HCT116 (cell line): ENCODE measurements at regions of chr1 and their contacts with region 1.

Region 1: DNA sequence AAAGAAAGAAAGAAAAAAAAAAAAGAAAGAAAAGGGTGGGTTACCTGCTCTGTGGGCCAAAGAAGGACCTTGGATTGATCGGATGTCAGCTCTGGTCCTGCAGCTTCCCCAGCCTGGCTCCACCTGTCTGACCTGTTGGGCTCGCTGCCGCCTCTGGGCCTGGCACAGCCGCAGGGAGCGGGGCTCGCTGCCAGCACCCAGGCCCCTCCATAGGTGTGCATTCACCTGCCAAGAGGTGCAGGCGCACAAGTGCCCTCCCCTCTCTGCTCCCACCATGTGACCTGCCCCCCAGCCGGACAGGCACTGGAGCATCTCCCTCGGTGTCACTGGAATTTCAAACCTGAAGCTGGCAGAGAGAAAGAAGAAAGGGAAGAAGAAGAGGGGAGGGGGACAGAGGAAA is 33.1 kb upstream of the GPR157 start:
- DNase-seq: no peak
- ATAC-seq: no peak
- H3K4me3 ChIP-seq: no peak overlapping the region
- H3K27ac ChIP-seq: no peak overlapping the region
- H3K4me1 ChIP-seq: peaks cover 39 to 44% of the 10 kb centered on the region in 2 experiments
- H3K27me3 ChIP-seq: peaks cover 4% of the 10 kb centered on the region; the same call in 1 of the 2 replicates
- CTCF ChIP-seq: no peak
- POLR2A ChIP-seq: no peak
- RAD21 ChIP-seq: no peak

Region 2: GRCh38 chr1:9133870-9134585 is 27.9 kb before region 1 on chr1:
- CTCF ChIA-PET with region 1: no interaction called
- POLR2A ChIA-PET with region 1: no interaction called
- RAD21 ChIA-PET with region 1: no interaction called
- intact Hi-C with region 1: loop called (anchors 2 kb)
- DNase-seq: no peak
- ATAC-seq: no peak
- H3K4me3 ChIP-seq: no peak overlapping the region
- H3K27ac ChIP-seq: no peak overlapping the region
- H3K4me1 ChIP-seq: peaks cover 9 to 10% of the 10 kb centered on the region in 2 experiments; a peak in 3 of 4 replicates
- H3K27me3 ChIP-seq: no peaks in the 10 kb centered on the region; the same call in 1 of the 2 replicates
- CTCF ChIP-seq: no peak
- POLR2A ChIP-seq: no peak
- RAD21 ChIP-seq: no peak

Region 3: DNA sequence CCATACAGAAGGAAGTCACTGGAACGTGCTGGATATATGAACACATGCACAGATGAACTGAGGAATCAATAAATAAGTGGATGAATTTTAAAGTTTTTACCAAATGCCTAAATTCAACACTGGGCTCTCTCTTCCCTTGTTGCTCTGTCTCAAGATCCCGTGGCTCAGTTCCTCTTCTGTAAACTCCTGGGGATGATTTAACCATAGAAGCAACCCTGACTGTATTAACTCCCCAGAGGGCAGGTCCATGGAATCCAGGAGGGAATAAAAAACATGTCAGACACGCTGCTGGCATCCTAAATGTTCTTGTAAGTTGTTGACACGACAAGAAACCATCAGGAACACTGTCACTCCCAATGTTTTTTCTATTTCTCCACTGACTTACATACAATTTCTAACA is 12.3 kb after region 1 on chr1:
- CTCF ChIA-PET with region 1: no interaction called
- POLR2A ChIA-PET with region 1: no interaction called
- RAD21 ChIA-PET with region 1: no interaction called
- intact Hi-C with region 1: no loop called
- DNase-seq: no peak
- ATAC-seq: no peak
- H3K4me3 ChIP-seq: no peak overlapping the region
- H3K27ac ChIP-seq: no peak overlapping the region
- H3K4me1 ChIP-seq: no peaks in the 10 kb centered on the region
- H3K27me3 ChIP-seq: no peaks in the 10 kb centered on the region
- CTCF ChIP-seq: no peak
- POLR2A ChIP-seq: no peak
- RAD21 ChIP-seq: no peak